PC-3 (cell line): ENCODE measurements at regions of chrX and their contacts with region 1.

Region 1: DNA sequence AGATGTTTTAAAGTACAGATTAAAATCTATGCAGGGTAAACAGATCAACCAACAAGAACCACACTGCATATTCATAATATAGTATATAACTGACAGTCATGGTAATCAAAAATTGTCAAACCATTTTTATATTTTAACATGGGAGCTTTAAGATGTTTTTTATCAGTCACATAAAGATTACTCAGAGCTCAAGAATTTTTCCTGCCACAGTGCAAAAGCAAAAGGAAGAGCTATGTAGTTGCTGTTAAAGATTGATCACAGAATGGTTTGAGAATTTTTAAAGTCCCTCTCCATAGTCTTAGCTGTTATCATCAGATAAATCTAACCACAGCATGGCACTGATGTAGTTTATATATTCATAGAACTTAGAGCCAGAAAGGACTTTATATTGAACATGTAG is 8.5 kb downstream of the RAB9B start:
- DNase-seq: peak; percentile 45
- ATAC-seq: peak; percentile 53
- H3K4me3 ChIP-seq: no peak overlapping the region
- H3K27ac ChIP-seq: no peak overlapping the region
- H3K4me1 ChIP-seq: peaks cover 10% of the 10 kb centered on the region
- H3K27me3 ChIP-seq: no peaks in the 10 kb centered on the region
- CTCF ChIP-seq: no peak

Region 2: GRCh38 chrX:104165894-104166737 is 342.5 kb after region 1 on chrX and contains the start of gene FAM199X:
- CTCF ChIA-PET with region 1: interaction called, 11 read pairs
- POLR2A ChIA-PET with region 1: no interaction called
- intact Hi-C with region 1: no loop called
- DNase-seq: peak; percentile 91
- ATAC-seq: peak; percentile 89
- H3K4me3 ChIP-seq: peak within 1 kb of the TSS; percentile 87
- H3K27ac ChIP-seq: peak within 1 kb of the TSS; percentile 60
- H3K4me1 ChIP-seq: peaks cover 18% of the 10 kb centered on the region
- H3K27me3 ChIP-seq: no peaks in the 10 kb centered on the region
- CTCF ChIP-seq: peak; percentile 57
- total RNA-seq, gene FAM199X: 25.9 and 26.0 TPM in 2 replicates